ENCODE measurements at regions of chr2 and their contacts with region 1.

Region 1: DNA sequence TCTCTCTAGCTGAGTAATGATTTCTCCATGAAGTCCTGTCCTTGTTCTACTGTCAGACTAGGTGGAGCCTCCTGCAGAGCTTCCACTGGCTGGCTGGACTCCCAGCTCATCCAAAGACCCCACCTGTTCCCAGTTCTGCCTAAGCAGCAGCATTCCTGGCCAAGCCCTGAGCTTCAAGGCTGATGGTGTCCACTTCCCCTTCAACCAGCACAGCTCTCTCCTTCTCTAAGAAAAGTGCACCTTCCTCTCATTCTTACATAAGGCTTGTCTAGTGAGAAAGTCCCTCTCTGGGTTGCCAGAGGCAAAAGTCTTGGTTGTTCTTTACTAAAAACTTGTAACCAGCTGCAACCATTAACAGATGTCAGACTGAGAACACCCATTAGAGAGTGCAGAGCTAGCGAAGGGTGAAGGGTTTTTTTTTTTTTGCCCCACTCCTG is 58.9 kb downstream of the CXCR4 start:
- DNase-seq: peak; percentile 63
- ATAC-seq: peak; percentile 63
- H3K4me3 ChIP-seq: no peak overlapping the region
- H3K27ac ChIP-seq: peak overlapping the region; percentile 40; the same call in 1 of the 2 replicates
- H3K4me1 ChIP-seq: peaks cover 51% of the 10 kb centered on the region
- H3K27me3 ChIP-seq: no peaks in the 10 kb centered on the region
- CTCF ChIP-seq: no peak
- EP300 ChIP-seq: peak in 1 of 2 experiments; percentile 45; a peak in 1 of 4 replicates
- POLR2A ChIP-seq: no peak
- RAD21 ChIP-seq: peak; percentile 15; the same call in 1 of the 2 replicates

Region 2: DNA sequence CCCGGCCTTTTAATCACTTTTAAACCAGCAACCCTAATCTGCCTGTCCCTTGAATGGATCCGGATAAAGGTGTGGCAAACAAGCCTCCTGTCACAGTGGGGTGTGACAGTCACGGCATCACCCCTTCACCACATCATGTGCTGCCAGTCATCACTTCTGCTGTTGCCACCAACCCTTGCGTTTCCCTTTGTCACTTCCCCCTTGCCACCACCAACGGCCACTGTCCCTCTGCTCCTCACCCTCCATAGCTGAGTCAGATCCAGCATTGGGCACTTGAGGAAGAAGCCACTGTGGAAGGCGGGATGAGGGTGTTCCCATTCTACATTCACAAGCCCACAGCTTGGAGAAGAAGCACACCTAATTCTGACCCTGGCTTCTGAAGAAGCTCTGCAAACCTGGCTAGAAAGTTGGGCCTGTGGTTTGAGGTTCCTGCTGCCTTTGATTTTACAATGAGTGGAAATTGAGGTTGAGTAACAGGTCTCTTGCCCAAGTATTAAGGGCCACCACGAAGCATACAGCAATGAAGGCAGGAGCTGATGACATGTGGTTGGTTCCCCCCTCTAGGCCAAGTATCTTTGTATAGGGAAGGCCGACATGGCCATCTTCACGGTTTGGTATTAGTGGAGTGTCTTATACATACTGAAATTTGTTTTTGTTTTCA is 50.7 kb before region 1 on chr2:
- CTCF ChIA-PET with region 1: interaction called, 5 read pairs
- POLR2A ChIA-PET with region 1: interaction called, 35 read pairs
- RAD21 ChIA-PET with region 1: interaction called, 7 read pairs
- SMC1A ChIA-PET with region 1: interaction called, 961 read pairs
- in situ Hi-C with region 1: no loop called
- intact Hi-C with region 1: no loop called
- DNase-seq: no peak
- ATAC-seq: peak; percentile 69
- H3K4me3 ChIP-seq: no peak overlapping the region
- H3K27ac ChIP-seq: no peak overlapping the region
- H3K4me1 ChIP-seq: peaks cover 9% of the 10 kb centered on the region
- H3K27me3 ChIP-seq: no peaks in the 10 kb centered on the region
- CTCF ChIP-seq: no peak
- EP300 ChIP-seq: peak in 1 of 2 experiments; percentile 33; a peak in 1 of 4 replicates
- POLR2A ChIP-seq: no peak
- RAD21 ChIP-seq: no peak

Region 3: GRCh38 chr2:136075466-136075865 is 16.4 kb after region 1 on chr2:
- CTCF ChIA-PET with region 1: interaction called, 4 read pairs
- POLR2A ChIA-PET with region 1: interaction called, 39 read pairs
- RAD21 ChIA-PET with region 1: interaction called, 57 read pairs
- SMC1A ChIA-PET with region 1: interaction called, 113 read pairs
- in situ Hi-C with region 1: no loop called
- intact Hi-C with region 1: no loop called
- DNase-seq: no peak
- ATAC-seq: no peak
- H3K4me3 ChIP-seq: no peak overlapping the region
- H3K27ac ChIP-seq: no peak overlapping the region
- H3K4me1 ChIP-seq: no peaks in the 10 kb centered on the region
- H3K27me3 ChIP-seq: no peaks in the 10 kb centered on the region
- CTCF ChIP-seq: no peak
- EP300 ChIP-seq: no peak
- POLR2A ChIP-seq: no peak
- RAD21 ChIP-seq: no peak

Region 4: GRCh38 chr2:136117909-136118818 is 59.1 kb after region 1 on chr2 and contains the start of gene CXCR4:
- CTCF ChIA-PET with region 1: interaction called, 103 read pairs
- POLR2A ChIA-PET with region 1: interaction called, 28 read pairs
- RAD21 ChIA-PET with region 1: interaction called, 221 read pairs
- SMC1A ChIA-PET with region 1: interaction called, 400 read pairs
- in situ Hi-C with region 1: no loop called
- intact Hi-C with region 1: loop called (anchors 1 kb)
- DNase-seq: no peak
- ATAC-seq: peak; percentile 43
- H3K4me3 ChIP-seq: peak within 1 kb of the TSS; percentile 85
- H3K27ac ChIP-seq: peak within 1 kb of the TSS; percentile 40; the same call in 1 of the 2 replicates
- H3K4me1 ChIP-seq: peaks cover 2% of the 10 kb centered on the region; the same call in 1 of the 2 replicates
- H3K27me3 ChIP-seq: peaks cover 0 to 12% of the 10 kb centered on the region in 2 experiments
- CTCF ChIP-seq: peak in 1 of 3 experiments; percentile 19; a peak in 1 of 6 replicates
- EP300 ChIP-seq: no peak
- POLR2A ChIP-seq: peak; percentile 97
- RAD21 ChIP-seq: 0 out of 2 replicates have a peak, but pooled peaks have one; percentile 9
- polyA plus RNA-seq, gene CXCR4: 31.1 to 32.3 TPM

Region 5: DNA sequence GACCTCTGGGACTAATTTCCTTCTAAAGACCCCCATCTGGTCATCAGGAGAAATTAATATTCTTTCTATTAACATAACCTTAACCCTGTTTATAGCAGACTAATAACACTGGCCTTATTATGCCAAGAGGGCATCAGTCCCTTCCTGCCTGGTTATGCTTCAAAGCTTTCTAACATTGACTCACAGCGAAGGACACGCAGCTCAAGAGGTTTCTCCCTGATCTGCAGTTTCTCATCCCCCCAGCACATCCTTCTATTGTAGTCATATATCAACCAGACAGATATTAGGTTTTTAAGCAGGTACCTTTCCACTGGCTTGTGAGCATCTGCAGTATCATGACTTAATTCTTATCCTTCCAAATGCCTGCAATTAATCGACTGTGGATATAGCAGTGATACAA is 158.9 kb after region 1 on chr2:
- CTCF ChIA-PET with region 1: interaction called, 7 read pairs
- POLR2A ChIA-PET with region 1: interaction called, 13 read pairs
- RAD21 ChIA-PET with region 1: interaction called, 78 read pairs
- SMC1A ChIA-PET with region 1: interaction called, 31 read pairs
- in situ Hi-C with region 1: no loop called
- intact Hi-C with region 1: no loop called
- DNase-seq: no peak
- ATAC-seq: peak; percentile 77
- H3K4me3 ChIP-seq: no peak overlapping the region
- H3K27ac ChIP-seq: no peak overlapping the region
- H3K4me1 ChIP-seq: no peaks in the 10 kb centered on the region
- H3K27me3 ChIP-seq: peaks cover 0 to 9% of the 10 kb centered on the region in 2 experiments; a peak in 1 of 4 replicates
- CTCF ChIP-seq: no peak
- EP300 ChIP-seq: peak in 1 of 2 experiments; percentile 40; a peak in 1 of 4 replicates
- POLR2A ChIP-seq: no peak
- RAD21 ChIP-seq: no peak

Region 6: GRCh38 chr2:136327162-136327852 is 268.3 kb after region 1 on chr2:
- CTCF ChIA-PET with region 1: interaction called, 5 read pairs
- POLR2A ChIA-PET with region 1: no interaction called
- RAD21 ChIA-PET with region 1: interaction called, 8 read pairs
- SMC1A ChIA-PET with region 1: interaction called, 21 read pairs
- in situ Hi-C with region 1: no loop called
- intact Hi-C with region 1: loop called (anchors 2 kb)
- DNase-seq: peak; percentile 71
- ATAC-seq: peak; percentile 89
- H3K4me3 ChIP-seq: peak overlapping the region; percentile 37; the same call in 1 of the 2 replicates
- H3K27ac ChIP-seq: no peak overlapping the region
- H3K4me1 ChIP-seq: peaks cover 26% of the 10 kb centered on the region
- H3K27me3 ChIP-seq: 0 out of 4 replicates have a peak, but pooled peaks cover 0 to 2% of the 10 kb centered on the region in 2 experiments
- CTCF ChIP-seq: no peak
- EP300 ChIP-seq: peak; percentile 95 to 96; a peak in 3 of 4 replicates
- POLR2A ChIP-seq: no peak
- RAD21 ChIP-seq: no peak

Measured in GM12878 (cell line).